Heart left ventricle (tissue), 16 donors: ENCODE measurements at regions of chr16 and their contacts with region 1.

Region 1: GRCh38 chr16:21708533-21709115 is 44.9 kb downstream of the OTOA start:
- DNase-seq: peak; percentile 45 to 73 (median 58)
- ATAC-seq: peak in 2 of 4 donors; percentile 53 to 63
- H3K4me3 ChIP-seq: no peak overlapping the region
- H3K27ac ChIP-seq: no peak overlapping the region
- H3K4me1 ChIP-seq: peaks cover 0 to 9% (median 0%) of the 10 kb centered on the region in 12 donors
- H3K27me3 ChIP-seq: peaks cover 0 to 3% (median 0%) of the 10 kb centered on the region in 9 donors
- CTCF ChIP-seq: peak; percentile 78 to 90 (median 84)
- POLR2A ChIP-seq: no peak

Region 2: DNA sequence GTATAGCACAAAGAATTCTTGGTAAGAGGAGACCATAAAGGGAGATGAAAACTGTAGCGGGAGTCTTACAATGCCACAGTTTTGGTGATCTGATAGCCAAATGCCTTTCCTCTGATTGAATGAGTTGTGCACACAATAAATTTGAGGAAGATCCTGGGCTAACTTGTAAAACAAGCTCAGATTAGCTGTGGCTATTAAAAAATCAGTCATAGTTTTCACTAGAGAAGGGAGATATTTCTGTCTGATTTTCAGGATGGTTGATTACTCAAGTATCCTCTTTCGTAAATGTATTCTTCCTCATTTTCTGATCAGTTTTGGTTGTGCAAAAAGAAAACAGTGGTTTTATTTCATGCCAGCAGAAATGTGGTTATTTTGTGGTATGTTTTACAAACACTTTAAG is 118.3 kb before region 1 on chr16:
- intact Hi-C with region 1: loop called in 3 of 10 experiments (anchors 2 to 10 kb)
- DNase-seq: no peak
- ATAC-seq: no peak
- H3K4me3 ChIP-seq: no peak overlapping the region
- H3K27ac ChIP-seq: peak overlapping the region in 1 of 12 donors; percentile 40
- H3K4me1 ChIP-seq: peaks cover 0 to 33% (median 0%) of the 10 kb centered on the region in 12 donors
- H3K27me3 ChIP-seq: no peaks in the 10 kb centered on the region
- CTCF ChIP-seq: no peak
- POLR2A ChIP-seq: no peak

Region 3: DNA sequence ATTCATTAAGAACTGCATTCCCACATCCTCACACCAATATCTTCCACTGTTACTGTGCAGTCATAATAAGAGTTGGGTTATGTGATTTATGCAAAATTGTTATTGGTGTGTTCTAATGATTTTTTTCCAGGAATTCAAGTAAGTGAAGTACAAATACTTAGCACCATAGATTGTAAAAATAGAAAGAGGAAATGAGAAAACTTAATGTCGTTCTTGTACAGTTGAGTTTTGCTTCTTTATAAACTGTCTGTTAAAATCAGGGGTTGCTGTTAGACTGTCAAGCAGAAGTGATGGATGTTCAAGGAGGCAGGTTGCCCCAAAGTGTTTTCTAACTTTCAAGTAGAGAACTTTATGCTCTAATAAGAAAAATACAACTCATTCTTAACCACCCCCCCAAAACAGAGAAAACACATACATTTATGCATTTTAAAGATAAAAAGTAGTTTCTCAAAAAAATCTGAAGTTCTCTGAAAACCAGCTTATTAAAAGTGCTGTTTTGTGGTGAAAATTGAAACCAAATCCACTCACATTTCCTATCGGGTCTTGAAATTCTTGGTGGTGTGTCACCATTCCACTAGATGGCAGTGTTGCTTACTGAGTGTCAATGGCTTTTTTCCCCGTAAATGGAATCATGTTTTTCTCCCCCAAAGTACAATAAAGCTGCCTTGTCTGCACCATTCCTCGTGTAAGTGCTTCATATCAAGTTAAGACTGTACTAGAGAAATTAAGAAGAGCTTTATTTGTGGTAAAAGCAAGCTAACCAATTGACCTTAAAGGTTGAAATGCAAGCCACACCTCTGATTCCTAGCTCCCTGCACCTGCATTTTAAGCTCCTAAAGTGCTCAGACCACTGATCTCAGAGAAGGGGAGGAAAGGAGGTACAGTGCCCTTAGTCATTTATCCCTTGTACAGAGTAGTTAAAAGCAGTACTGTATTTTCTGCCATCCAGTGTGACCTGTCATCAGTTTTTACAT is 51.5 kb before region 1 on chr16:
- intact Hi-C with region 1: loop called (anchors 1 to 10 kb)
- DNase-seq: no peak
- ATAC-seq: no peak
- H3K4me3 ChIP-seq: no peak overlapping the region
- H3K27ac ChIP-seq: peak overlapping the region in 1 of 12 donors; percentile 38
- H3K4me1 ChIP-seq: peaks cover 0 to 71% (median 0%) of the 10 kb centered on the region in 12 donors
- H3K27me3 ChIP-seq: no peaks in the 10 kb centered on the region
- CTCF ChIP-seq: peak; percentile 75 to 92 (median 82)
- POLR2A ChIP-seq: no peak